ENCODE measurements at regions of chr4 and their contacts with region 1.

Region 1: GRCh38 chr4:142353149-142353738 is 492.9 kb downstream of the INPP4B start:
- DNase-seq: no peak
- H3K4me3 Mint-ChIP-seq: peak overlapping the region; percentile 48
- H3K27ac Mint-ChIP-seq: peak overlapping the region; percentile 90
- H3K4me1 Mint-ChIP-seq: peaks cover 94% of the 10 kb centered on the region
- H3K27me3 Mint-ChIP-seq: no peaks in the 10 kb centered on the region

Region 2: DNA sequence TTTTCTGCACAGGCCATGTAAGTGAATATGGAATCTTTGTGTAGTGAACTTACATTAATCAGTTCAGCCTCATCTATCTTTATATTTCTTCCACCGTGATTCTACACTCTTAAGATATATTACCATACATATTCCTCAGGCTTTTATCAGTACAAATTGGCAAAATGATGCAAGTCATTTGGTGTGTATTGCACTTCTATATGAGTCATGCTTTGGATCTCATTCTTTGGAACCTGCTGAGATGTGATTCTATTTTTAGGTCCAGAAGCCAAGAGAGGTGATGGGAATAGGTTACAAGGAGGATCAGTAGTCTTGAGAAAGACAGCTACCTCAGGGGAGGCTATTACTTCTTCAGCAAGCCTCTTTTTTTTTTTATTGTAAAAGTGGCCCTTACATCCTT is 928.1 kb before region 1 on chr4:
- CTCF ChIA-PET with region 1: no interaction called
- intact Hi-C with region 1: no loop called
- DNase-seq: no peak
- H3K4me3 Mint-ChIP-seq: no peak overlapping the region
- H3K27ac Mint-ChIP-seq: no peak overlapping the region
- H3K4me1 Mint-ChIP-seq: no peaks in the 10 kb centered on the region
- H3K27me3 Mint-ChIP-seq: peaks cover 9% of the 10 kb centered on the region

Region 3: DNA sequence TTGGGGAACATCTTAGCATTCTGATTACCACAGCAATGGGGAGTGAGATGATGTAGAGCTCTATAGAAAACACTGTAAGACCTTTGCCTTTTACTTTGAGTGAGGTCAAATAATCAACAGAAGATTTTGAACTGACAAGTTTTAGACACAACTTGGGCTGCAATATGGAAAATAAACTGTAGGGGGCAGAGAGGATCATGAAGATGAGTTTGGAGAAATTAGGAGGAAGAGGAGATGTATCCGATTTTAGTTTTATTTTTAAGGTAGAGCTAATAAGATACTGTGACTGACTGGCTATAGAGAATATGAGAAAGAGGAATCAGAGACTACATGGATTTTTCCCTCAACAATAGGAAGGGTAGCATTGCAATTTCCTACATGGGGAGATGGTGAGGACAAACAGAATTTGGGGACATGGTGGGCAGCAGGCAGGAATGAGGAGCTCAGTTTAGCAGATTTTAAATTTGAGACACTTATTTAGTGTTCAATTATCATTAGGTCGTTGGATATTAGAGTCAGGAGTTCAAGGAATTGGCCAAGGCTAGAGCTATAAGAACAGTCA is 70.3 kb before region 1 on chr4:
- CTCF ChIA-PET with region 1: interaction called, 16 read pairs
- intact Hi-C with region 1: loop called (anchors 1 kb)
- DNase-seq: peak; percentile 60
- H3K4me3 Mint-ChIP-seq: no peak overlapping the region
- H3K27ac Mint-ChIP-seq: no peak overlapping the region
- H3K4me1 Mint-ChIP-seq: peaks cover 29% of the 10 kb centered on the region
- H3K27me3 Mint-ChIP-seq: no peaks in the 10 kb centered on the region

Region 4: GRCh38 chr4:142341268-142341667 is 12.0 kb before region 1 on chr4:
- CTCF ChIA-PET with region 1: interaction called, 11 read pairs
- intact Hi-C with region 1: no loop called
- DNase-seq: no peak
- H3K4me3 Mint-ChIP-seq: no peak overlapping the region
- H3K27ac Mint-ChIP-seq: peak overlapping the region; percentile 59
- H3K4me1 Mint-ChIP-seq: peaks cover 59% of the 10 kb centered on the region
- H3K27me3 Mint-ChIP-seq: no peaks in the 10 kb centered on the region

Region 5: GRCh38 chr4:142379277-142380057 is 26.2 kb after region 1 on chr4:
- CTCF ChIA-PET with region 1: interaction called, 16 read pairs
- intact Hi-C with region 1: loop called (anchors 1 kb)
- DNase-seq: no peak
- H3K4me3 Mint-ChIP-seq: no peak overlapping the region
- H3K27ac Mint-ChIP-seq: peak overlapping the region; percentile 75
- H3K4me1 Mint-ChIP-seq: peaks cover 72% of the 10 kb centered on the region
- H3K27me3 Mint-ChIP-seq: no peaks in the 10 kb centered on the region

Region 6: DNA sequence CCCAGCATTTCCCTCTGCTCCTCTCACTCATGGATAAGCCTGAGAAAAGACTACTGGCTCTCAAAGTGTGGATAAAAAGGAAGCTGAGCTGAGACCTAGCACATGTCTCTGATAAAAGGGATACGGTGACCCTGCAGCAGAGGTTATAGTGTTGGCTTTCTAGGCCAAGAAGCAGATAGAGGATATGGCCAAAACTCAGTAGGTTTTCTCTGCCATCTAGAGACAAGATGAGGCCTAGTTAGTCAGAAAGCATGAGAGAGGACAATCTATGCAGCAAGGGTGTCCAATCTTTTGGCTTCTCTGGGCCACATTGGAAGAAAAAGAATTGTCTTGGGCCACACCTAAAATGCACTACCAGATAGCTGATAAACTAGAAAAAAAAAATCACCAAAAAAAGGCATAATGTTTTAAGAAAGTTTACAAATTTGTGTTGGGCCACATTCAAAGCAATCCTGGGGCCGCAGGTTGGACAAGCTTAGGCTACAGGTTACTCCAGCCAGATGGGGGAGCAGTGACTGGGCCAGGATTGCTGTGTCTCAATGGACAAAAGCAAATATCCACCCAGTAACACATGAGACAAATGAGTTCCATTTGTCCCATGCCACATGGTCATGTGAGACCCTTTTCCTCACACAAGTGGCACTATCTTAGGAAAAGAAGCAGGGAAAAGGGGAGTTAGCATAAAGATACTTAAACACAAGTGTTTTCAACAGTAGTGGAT is 81.4 kb after region 1 on chr4:
- CTCF ChIA-PET with region 1: interaction called, 3 read pairs
- intact Hi-C with region 1: loop called (anchors 1 kb)
- DNase-seq: no peak
- H3K4me3 Mint-ChIP-seq: no peak overlapping the region
- H3K27ac Mint-ChIP-seq: no peak overlapping the region
- H3K4me1 Mint-ChIP-seq: peaks cover 40% of the 10 kb centered on the region
- H3K27me3 Mint-ChIP-seq: no peaks in the 10 kb centered on the region

Region 7: DNA sequence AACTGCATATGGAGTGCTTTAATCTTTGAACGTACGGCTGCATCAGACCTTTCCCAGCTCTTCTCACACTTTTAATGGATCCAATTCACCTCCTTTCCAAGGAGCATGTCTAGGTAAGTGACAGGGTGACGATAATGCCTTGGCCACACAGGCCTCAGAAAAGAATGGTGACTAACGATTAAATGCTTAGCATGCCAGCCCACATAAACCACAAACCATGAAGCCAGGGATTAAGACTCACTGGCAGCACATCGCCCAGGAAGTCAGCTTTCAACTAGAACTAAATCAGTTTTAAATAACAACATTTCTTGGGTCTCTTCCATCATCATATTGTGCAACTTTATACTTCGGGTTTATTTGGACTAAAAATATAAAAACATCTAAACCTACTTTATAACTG is 464.2 kb after region 1 on chr4:
- CTCF ChIA-PET with region 1: no interaction called
- intact Hi-C with region 1: loop called (anchors 2 kb)
- DNase-seq: peak; percentile 80
- H3K4me3 Mint-ChIP-seq: peak overlapping the region; percentile 27
- H3K27ac Mint-ChIP-seq: peak overlapping the region; percentile 30
- H3K4me1 Mint-ChIP-seq: peaks cover 23% of the 10 kb centered on the region
- H3K27me3 Mint-ChIP-seq: no peaks in the 10 kb centered on the region

Region 8: DNA sequence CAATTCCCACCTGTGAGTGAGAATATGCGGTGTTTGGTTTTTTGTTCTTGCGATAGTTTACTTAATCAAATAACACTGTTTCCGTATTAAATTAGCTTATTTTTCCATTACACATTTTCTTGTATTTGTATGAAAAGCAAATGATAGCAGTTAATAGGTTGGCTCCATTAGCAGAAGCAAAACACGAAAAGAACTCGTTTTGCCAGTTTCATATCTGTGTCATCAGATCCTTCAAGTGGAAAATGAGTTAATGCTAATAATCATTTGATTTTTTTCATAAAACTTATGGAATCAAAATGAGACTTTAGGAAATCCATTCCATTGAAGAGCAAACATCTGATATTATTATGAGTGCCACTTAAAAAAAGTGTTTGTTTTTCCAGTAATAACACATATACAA is 646.7 kb after region 1 on chr4:
- CTCF ChIA-PET with region 1: no interaction called
- intact Hi-C with region 1: no loop called
- DNase-seq: no peak
- H3K4me3 Mint-ChIP-seq: no peak overlapping the region
- H3K27ac Mint-ChIP-seq: no peak overlapping the region
- H3K4me1 Mint-ChIP-seq: no peaks in the 10 kb centered on the region
- H3K27me3 Mint-ChIP-seq: no peaks in the 10 kb centered on the region

Region 9: GRCh38 chr4:143133977-143134376 is 780.7 kb after region 1 on chr4:
- CTCF ChIA-PET with region 1: no interaction called
- intact Hi-C with region 1: no loop called
- DNase-seq: no peak
- H3K4me3 Mint-ChIP-seq: no peak overlapping the region
- H3K27ac Mint-ChIP-seq: no peak overlapping the region
- H3K4me1 Mint-ChIP-seq: no peaks in the 10 kb centered on the region
- H3K27me3 Mint-ChIP-seq: no peaks in the 10 kb centered on the region